Sigmoid colon (tissue), 7 donors: ENCODE measurements at regions of chrX and their contacts with region 1.

Region 1: GRCh38 chrX:72258174-72258573 is 18.9 kb downstream of the RPS4X start:
- DNase-seq: no peak
- H3K4me3 ChIP-seq: no peak overlapping the region
- H3K27ac ChIP-seq: no peak overlapping the region
- H3K4me1 ChIP-seq: no peaks in the 10 kb centered on the region
- H3K27me3 ChIP-seq: peaks cover 0 to 3% (median 0%) of the 10 kb centered on the region in 3 donors
- CTCF ChIP-seq: no peak
- EP300 ChIP-seq: no peak
- POLR2A ChIP-seq: no peak

Region 2: DNA sequence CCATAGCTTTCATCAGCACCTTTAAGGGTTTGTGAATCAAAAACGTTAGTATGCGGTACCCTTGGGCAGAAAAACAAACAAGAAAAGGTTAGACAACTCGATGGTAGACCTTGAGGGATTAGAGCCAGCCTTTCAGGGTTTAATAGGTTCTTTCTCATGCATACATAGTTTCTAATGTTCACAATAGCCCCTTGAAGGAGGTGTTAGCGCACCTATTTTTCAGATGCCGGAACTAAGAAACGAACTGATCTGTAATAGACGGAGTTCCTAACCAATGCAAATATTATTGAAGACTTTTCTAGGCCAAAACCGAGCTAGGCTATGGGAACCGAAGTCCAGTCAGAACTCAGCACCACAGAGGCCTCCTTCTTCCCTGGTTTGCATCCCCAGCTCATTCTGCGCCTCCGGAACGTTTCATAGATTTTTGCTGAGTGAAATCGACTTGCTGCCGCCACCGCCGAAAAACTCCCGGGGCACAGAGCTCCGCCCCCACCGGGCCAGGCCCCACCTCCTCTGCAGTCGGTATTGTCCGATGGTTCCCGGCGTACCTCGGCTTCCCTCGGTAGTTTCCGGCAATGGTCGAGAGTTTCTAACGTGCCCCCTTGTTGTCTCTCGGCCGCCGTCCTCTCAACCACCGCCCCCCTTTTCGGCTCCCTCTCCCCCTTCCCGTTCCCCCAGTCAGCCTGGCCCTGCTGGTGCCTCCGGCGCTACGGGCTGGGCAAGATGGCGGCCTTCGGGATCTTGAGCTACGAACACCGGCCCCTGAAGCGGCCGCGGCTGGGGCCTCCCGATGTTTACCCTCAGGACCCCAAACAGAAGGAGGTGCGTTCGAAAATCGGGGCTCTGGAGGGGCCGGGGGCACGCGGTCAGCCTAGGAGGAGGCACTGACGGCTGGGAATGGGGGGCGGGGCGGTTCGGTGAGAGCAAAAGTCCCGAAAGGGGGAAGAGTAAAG is 1139.9 kb before region 1 on chrX and contains the start of gene MED12:
- intact Hi-C with region 1: loop called (anchors 10 kb)
- DNase-seq: peak; percentile 92
- H3K4me3 ChIP-seq: peak within 1 kb of the TSS; percentile 51 to 63 (median 62)
- H3K27ac ChIP-seq: peak within 1 kb of the TSS; percentile 76 to 87 (median 80)
- H3K4me1 ChIP-seq: peaks cover 0 to 15% (median 4%) of the 10 kb centered on the region in 4 donors
- H3K27me3 ChIP-seq: no peaks in the 10 kb centered on the region
- CTCF ChIP-seq: no peak
- EP300 ChIP-seq: no peak
- POLR2A ChIP-seq: no peak
- total RNA-seq, gene MED12: 15.6 to 27.6 (median 24.4) TPM

Region 3: GRCh38 chrX:71885099-71885498 is 373.1 kb before region 1 on chrX:
- intact Hi-C with region 1: no loop called
- DNase-seq: no peak
- H3K4me3 ChIP-seq: no peak overlapping the region
- H3K27ac ChIP-seq: no peak overlapping the region
- H3K4me1 ChIP-seq: no peaks in the 10 kb centered on the region
- H3K27me3 ChIP-seq: no peaks in the 10 kb centered on the region
- CTCF ChIP-seq: no peak
- EP300 ChIP-seq: no peak
- POLR2A ChIP-seq: no peak

Region 4: GRCh38 chrX:72131317-72132294 is 126.6 kb before region 1 on chrX and contains the start of gene RTL5:
- intact Hi-C with region 1: no loop called
- DNase-seq: peak; percentile 97
- H3K4me3 ChIP-seq: peak within 1 kb of the TSS; percentile 43 to 60 (median 54)
- H3K27ac ChIP-seq: peak within 1 kb of the TSS; percentile 80 to 85 (median 83)
- H3K4me1 ChIP-seq: peaks cover 0 to 27% (median 11%) of the 10 kb centered on the region in 4 donors
- H3K27me3 ChIP-seq: peaks cover 0 to 3% (median 0%) of the 10 kb centered on the region in 3 donors
- CTCF ChIP-seq: no peak
- EP300 ChIP-seq: no peak
- POLR2A ChIP-seq: no peak
- total RNA-seq, gene RTL5: 2.7 to 7.5 (median 4.8) TPM